Activated CD8-positive, alpha-beta T cell treated with anti-CD3 and anti-CD28 coated beads, Interleukin-2, amount 10 ng/mL, durations not matched to agents 7 days and 5 days (primary cell): ENCODE measurements at regions of chr1 and their contacts with region 1.

Region 1: GRCh38 chr1:44036409-44037139 is 5.3 kb upstream of the SLC6A9 start:
- DNase-seq: peak; percentile 77
- ATAC-seq: peak; percentile 70
- H3K4me3 Mint-ChIP-seq: no peak overlapping the region
- H3K27ac Mint-ChIP-seq: no peak overlapping the region
- H3K4me1 Mint-ChIP-seq: peaks cover 10% of the 10 kb centered on the region
- H3K27me3 Mint-ChIP-seq: peaks cover 11% of the 10 kb centered on the region

Region 2: GRCh38 chr1:43974443-43975248 is 61.9 kb before region 1 on chr1 and contains the start of gene ATP6V0B:
- CTCF ChIA-PET with region 1: interaction called, 13 read pairs
- POLR2A ChIA-PET with region 1: no interaction called
- DNase-seq: peak; percentile 97
- ATAC-seq: peak; percentile 77
- H3K4me3 Mint-ChIP-seq: peak within 1 kb of the TSS; percentile 89
- H3K27ac Mint-ChIP-seq: peak within 1 kb of the TSS; percentile 89
- H3K4me1 Mint-ChIP-seq: peaks cover 58% of the 10 kb centered on the region
- H3K27me3 Mint-ChIP-seq: no peaks in the 10 kb centered on the region
- total RNA-seq, gene ATP6V0B: 116 to 117 TPM

Region 3: DNA sequence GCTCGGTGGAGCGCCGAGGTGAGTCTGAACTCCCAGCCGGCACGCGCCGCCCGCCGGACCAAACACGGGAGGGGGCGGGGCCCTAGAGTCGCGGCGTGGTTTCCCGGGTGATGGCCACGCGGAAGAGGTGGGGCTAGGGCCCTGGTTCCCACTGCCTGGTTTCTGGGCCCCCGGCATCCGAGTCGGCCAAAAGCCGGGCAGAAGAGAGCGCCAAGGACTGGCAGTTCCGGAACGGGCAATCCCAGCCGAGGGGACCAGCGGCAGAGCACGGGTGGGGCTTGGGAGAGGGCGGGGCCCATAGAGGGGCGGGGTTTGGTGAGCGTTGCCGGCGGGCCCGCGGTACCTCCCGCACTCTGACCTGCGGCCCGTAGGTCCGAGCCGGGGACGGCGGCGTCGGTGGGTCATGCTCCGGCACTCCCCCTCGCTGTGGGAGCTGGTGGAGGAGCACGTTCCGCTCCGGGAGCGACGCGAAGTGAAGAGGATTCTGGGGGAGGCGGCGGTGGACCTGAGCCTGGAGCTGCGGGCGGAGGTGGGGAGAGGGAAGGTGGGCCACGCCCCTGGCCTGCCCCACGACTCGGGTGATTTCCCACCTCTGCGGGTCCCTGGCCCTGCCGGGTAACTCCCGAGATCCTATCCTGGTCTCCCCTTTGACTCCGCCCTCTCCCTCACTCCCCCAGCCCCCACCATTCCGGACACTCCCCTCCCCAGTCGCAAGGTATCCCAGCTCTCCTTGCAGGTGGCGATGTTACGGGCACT is 44.9 kb before region 1 on chr1 and contains the start of gene CCDC24:
- CTCF ChIA-PET with region 1: interaction called, 17 read pairs
- POLR2A ChIA-PET with region 1: no interaction called
- DNase-seq: peak; percentile 80
- ATAC-seq: peak; percentile 87
- H3K4me3 Mint-ChIP-seq: peak within 1 kb of the TSS; percentile 89
- H3K27ac Mint-ChIP-seq: peak within 1 kb of the TSS; percentile 85
- H3K4me1 Mint-ChIP-seq: peaks cover 28% of the 10 kb centered on the region
- H3K27me3 Mint-ChIP-seq: no peaks in the 10 kb centered on the region
- total RNA-seq, gene CCDC24: 1.1 to 1.3 TPM

Region 4: GRCh38 chr1:44021581-44022321 is 14.8 kb before region 1 on chr1:
- CTCF ChIA-PET with region 1: interaction called, 10 read pairs
- POLR2A ChIA-PET with region 1: no interaction called
- DNase-seq: no peak
- ATAC-seq: no peak
- H3K4me3 Mint-ChIP-seq: no peak overlapping the region
- H3K27ac Mint-ChIP-seq: no peak overlapping the region
- H3K4me1 Mint-ChIP-seq: no peaks in the 10 kb centered on the region
- H3K27me3 Mint-ChIP-seq: no peaks in the 10 kb centered on the region

Region 5: GRCh38 chr1:44049839-44050238 is 13.3 kb after region 1 on chr1:
- CTCF ChIA-PET with region 1: interaction called, 45 read pairs
- POLR2A ChIA-PET with region 1: no interaction called
- DNase-seq: no peak
- ATAC-seq: no peak
- H3K4me3 Mint-ChIP-seq: no peak overlapping the region
- H3K27ac Mint-ChIP-seq: no peak overlapping the region
- H3K4me1 Mint-ChIP-seq: peaks cover 11% of the 10 kb centered on the region
- H3K27me3 Mint-ChIP-seq: peaks cover 16% of the 10 kb centered on the region

Region 6: DNA sequence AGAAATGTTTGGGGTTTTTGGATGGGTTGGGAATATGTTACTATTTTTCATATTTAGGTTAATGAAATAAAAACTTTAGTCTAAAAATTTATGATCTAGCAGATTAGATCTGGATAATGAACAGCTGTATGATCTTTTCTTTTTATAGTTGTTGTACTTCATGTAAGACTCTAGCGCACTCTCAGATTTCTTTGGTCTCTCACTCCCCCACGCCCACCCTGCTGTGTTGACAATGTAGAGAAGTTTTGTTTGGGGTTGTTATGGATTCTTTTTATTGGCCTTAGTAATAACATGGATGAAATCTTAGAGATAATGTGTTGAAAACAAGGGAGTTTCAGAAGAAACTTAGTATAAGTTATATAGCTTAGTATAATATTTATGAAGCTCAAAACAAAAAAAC is 99.3 kb after region 1 on chr1:
- CTCF ChIA-PET with region 1: no interaction called
- POLR2A ChIA-PET with region 1: no interaction called
- DNase-seq: no peak
- ATAC-seq: no peak
- H3K4me3 Mint-ChIP-seq: no peak overlapping the region
- H3K27ac Mint-ChIP-seq: no peak overlapping the region
- H3K4me1 Mint-ChIP-seq: no peaks in the 10 kb centered on the region
- H3K27me3 Mint-ChIP-seq: peaks cover 3% of the 10 kb centered on the region